ENCODE measurements at regions of chr12 and their contacts with region 1.

Region 1: GRCh38 chr12:55073043-55074022 is 52.9 kb upstream of the OR9K2 start:
- DNase-seq: peak in 2 of 3 donors; percentile 65 to 81
- ATAC-seq: peak; percentile 68
- H3K4me3 ChIP-seq: no peak overlapping the region
- H3K4me1 ChIP-seq: no peaks in the 10 kb centered on the region
- CTCF ChIP-seq: peak; percentile 68

Region 2: DNA sequence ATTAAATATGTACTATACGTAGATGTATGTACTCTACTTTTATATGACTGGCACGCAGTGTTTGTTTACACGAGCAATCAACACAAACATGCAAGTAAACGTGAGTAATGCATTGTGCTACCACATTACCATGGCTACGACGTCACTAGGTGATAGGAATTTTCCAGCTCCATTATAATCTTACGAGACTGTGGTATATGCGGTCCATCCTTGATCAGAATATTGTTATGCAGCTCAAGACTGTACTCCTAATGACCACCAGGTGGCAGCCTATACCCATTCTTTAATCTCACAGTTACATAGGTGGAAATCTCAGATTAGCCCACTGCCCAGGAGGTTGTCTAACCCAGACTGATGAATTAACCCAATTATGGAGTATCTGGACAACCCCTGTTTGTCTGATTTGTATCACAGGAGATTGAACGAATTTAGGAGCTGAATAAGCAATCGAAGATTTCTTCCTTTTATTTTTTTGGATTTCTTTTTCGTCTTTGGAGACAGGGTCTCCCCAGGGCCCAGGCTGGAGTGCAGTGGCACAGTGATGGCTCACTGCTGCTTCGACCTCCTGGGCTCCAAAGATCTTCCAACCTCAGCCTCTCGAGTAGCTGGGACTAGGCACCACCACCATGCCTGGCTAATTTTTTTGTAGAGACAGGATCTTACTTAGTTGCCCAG is 80.0 kb before region 1 on chr12:
- intact Hi-C with region 1: loop called (anchors 2 to 5 kb)
- DNase-seq: peak in 1 of 3 donors; percentile 75
- ATAC-seq: peak; percentile 79
- H3K4me3 ChIP-seq: no peak overlapping the region
- H3K4me1 ChIP-seq: no peaks in the 10 kb centered on the region
- CTCF ChIP-seq: peak; percentile 42

Region 3: DNA sequence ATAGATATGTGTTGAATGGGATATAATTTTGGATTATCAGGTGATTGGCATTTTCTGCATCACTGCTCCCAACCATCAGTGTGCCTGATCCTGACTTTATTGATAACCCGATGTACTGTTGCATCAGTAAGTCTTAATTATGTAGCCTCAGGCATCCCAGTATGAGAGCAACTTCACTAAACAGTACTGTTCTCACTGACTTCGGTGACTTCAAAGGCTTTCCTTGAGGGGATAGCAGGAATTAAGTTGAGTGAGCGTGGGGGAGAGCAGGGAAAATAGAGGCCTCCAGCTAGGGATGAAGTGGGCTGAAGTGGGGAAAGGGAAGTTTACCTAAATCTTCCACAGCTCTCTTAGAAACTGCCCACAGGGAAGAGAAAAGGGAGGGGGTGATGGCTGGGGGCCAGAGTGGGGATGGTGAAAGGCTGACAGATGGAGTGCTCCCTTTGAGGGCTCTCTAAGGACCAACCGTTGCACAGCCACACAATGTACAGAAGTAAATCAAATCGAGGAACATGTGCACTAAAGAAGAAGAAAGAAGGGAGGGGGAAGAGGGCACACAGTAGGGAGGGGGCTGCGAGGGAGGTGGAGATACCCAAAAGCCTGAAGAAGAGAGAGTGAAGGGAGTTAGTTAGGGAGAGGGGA is 64.3 kb before region 1 on chr12:
- intact Hi-C with region 1: no loop called
- DNase-seq: no peak
- ATAC-seq: no peak
- H3K4me3 ChIP-seq: no peak overlapping the region
- H3K4me1 ChIP-seq: no peaks in the 10 kb centered on the region
- CTCF ChIP-seq: no peak

Region 4: DNA sequence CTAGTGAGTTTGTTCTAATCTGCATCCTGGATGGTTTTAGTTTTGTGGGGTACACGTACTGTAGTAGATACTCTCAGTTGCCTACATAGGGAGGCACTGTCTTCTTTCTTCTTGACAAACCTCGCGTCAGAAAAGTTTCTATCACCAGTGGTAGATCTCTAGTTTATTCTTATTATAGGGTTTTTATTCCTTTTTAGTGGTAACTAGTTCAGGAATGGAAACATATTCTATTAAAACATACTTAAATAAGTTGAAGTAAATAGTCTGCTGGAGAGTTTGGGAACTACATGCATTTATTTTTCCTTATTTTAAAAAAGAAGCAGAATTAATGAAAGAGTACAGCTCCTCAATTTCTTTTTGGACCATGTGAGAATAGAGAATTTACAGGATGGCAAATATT is 19.2 kb after region 1 on chr12:
- intact Hi-C with region 1: no loop called
- DNase-seq: no peak
- ATAC-seq: no peak
- H3K4me3 ChIP-seq: no peak overlapping the region
- H3K4me1 ChIP-seq: no peaks in the 10 kb centered on the region
- CTCF ChIP-seq: no peak

Region 5: GRCh38 chr12:55250944-55251343 is 177.6 kb after region 1 on chr12:
- intact Hi-C with region 1: no loop called
- DNase-seq: no peak
- ATAC-seq: no peak
- H3K4me3 ChIP-seq: no peak overlapping the region
- H3K4me1 ChIP-seq: no peaks in the 10 kb centered on the region
- CTCF ChIP-seq: no peak

Measured in mucosa of descending colon (tissue), 3 donors.